ENCODE measurements at regions of chr6 and their contacts with region 1.

Region 1: DNA sequence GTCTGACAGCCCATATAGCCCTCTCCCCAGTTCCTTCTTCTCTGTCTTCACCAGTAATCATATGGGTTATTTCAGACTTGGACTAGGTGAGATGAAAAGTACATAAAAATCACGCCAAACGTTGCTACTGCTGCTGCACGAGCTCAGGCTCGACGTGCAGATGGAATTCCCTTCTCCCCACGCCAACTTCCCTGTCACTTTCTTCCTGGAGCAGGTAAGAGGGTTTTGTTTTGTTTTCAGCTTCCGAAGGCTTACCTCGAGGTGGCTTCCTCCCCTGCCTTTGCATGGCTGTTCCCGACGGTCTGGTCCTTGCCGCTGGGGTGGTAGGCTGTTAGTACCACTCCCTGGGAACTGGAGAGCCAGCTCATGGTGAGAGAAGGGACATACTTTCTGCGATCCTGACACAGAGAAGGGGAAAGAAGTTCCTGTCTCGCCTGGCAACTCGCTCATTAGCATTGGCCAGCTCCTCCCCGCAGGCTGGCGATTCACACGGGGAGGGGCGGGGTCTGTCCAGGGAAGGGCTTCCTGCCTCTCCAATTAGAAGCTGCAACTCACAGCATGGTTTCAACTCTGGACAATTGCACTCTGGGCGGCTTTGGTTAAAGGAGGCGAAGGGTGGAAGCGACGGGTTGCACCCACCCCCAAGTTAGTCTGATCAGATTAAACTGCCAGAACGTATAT is at the start of gene ARHGAP18:
- DNase-seq: peak; percentile 78
- ATAC-seq: peak; percentile 92
- H3K4me3 ChIP-seq: peak within 1 kb of the TSS; percentile 94
- H3K27ac ChIP-seq: peak within 1 kb of the TSS; percentile 73
- H3K4me1 ChIP-seq: peaks cover 17% of the 10 kb centered on the region
- H3K27me3 ChIP-seq: no peaks in the 10 kb centered on the region
- CTCF ChIP-seq: no peak
- EP300 ChIP-seq: no peak
- POLR2A ChIP-seq: peak; percentile 77
- RAD21 ChIP-seq: no peak
- polyA plus RNA-seq, gene ARHGAP18: 24.9 to 28.0 TPM

Region 2: GRCh38 chr6:129621247-129621646 is 88.7 kb before region 1 on chr6:
- CTCF ChIA-PET with region 1: interaction called, 6 read pairs
- POLR2A ChIA-PET with region 1: no interaction called
- RAD21 ChIA-PET with region 1: no interaction called
- SMC1A ChIA-PET with region 1: interaction called, 5 read pairs
- in situ Hi-C with region 1: no loop called
- intact Hi-C with region 1: loop called (anchors 5 kb)
- DNase-seq: no peak
- ATAC-seq: peak; percentile 74
- H3K4me3 ChIP-seq: no peak overlapping the region
- H3K27ac ChIP-seq: no peak overlapping the region
- H3K4me1 ChIP-seq: no peaks in the 10 kb centered on the region
- H3K27me3 ChIP-seq: no peaks in the 10 kb centered on the region
- CTCF ChIP-seq: peak; percentile 29 to 50 (median 37); a peak in 4 of 6 replicates
- EP300 ChIP-seq: no peak
- POLR2A ChIP-seq: no peak
- RAD21 ChIP-seq: 0 out of 2 replicates have a peak, but pooled peaks have one; percentile 7

Region 3: GRCh38 chr6:129646642-129647041 is 63.3 kb before region 1 on chr6:
- CTCF ChIA-PET with region 1: interaction called, 4 read pairs
- POLR2A ChIA-PET with region 1: interaction called, 17 read pairs
- RAD21 ChIA-PET with region 1: interaction called, 7 read pairs
- SMC1A ChIA-PET with region 1: interaction called, 8 read pairs
- in situ Hi-C with region 1: no loop called
- intact Hi-C with region 1: no loop called
- DNase-seq: peak; percentile 61
- ATAC-seq: peak; percentile 84
- H3K4me3 ChIP-seq: no peak overlapping the region
- H3K27ac ChIP-seq: peak overlapping the region; percentile 65
- H3K4me1 ChIP-seq: peaks cover 42% of the 10 kb centered on the region
- H3K27me3 ChIP-seq: no peaks in the 10 kb centered on the region
- CTCF ChIP-seq: no peak
- EP300 ChIP-seq: peak in 1 of 2 experiments; percentile 77; a peak in 2 of 4 replicates
- POLR2A ChIP-seq: no peak
- RAD21 ChIP-seq: no peak

Region 4: GRCh38 chr6:129661536-129662405 is 48.1 kb before region 1 on chr6:
- CTCF ChIA-PET with region 1: interaction called, 3 read pairs
- POLR2A ChIA-PET with region 1: interaction called, 11 read pairs
- RAD21 ChIA-PET with region 1: interaction called, 14 read pairs
- SMC1A ChIA-PET with region 1: interaction called, 26 read pairs
- in situ Hi-C with region 1: no loop called
- intact Hi-C with region 1: no loop called
- DNase-seq: no peak
- ATAC-seq: peak; percentile 40
- H3K4me3 ChIP-seq: peak overlapping the region; percentile 7; the same call in 1 of the 2 replicates
- H3K27ac ChIP-seq: peak overlapping the region; percentile 89
- H3K4me1 ChIP-seq: peaks cover 44% of the 10 kb centered on the region
- H3K27me3 ChIP-seq: no peaks in the 10 kb centered on the region
- CTCF ChIP-seq: no peak
- EP300 ChIP-seq: peak in 1 of 2 experiments; percentile 61; a peak in 1 of 4 replicates
- POLR2A ChIP-seq: no peak
- RAD21 ChIP-seq: no peak

Region 5: DNA sequence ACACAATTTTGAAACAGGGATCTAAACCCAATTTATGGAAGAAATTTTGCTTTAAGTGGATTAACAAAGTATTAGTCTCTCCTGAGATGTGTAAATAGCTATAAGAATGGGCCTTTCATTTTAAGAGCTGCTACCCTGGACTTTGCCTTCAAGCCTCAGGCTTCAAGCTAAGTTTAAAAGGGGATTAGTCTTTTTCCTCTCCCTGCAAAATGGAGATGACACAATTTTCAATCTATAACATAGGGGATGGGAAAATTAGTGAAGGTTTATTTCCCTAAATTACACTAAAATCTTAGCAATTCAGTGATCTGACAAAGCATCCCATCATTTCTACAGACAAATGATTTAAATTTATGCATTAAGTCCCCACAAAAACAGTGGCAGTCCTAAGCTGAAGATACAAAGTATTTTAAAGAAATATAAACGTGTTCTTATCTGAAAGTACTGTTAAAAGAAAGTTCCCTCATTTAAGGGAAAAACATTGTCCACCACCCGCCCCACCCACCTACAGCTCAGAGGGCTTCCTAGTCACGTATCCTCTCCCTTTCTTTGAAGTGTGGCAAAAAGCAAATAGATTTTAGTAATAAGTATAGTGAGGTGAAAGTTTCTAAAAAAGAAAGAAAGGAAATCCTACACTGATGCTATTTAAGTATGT is 14.4 kb before region 1 on chr6:
- CTCF ChIA-PET with region 1: interaction called, 58 read pairs
- POLR2A ChIA-PET with region 1: interaction called, 60 read pairs
- RAD21 ChIA-PET with region 1: interaction called, 93 read pairs
- SMC1A ChIA-PET with region 1: interaction called, 87 read pairs
- in situ Hi-C with region 1: no loop called
- intact Hi-C with region 1: no loop called
- DNase-seq: no peak
- ATAC-seq: peak; percentile 64
- H3K4me3 ChIP-seq: peak overlapping the region; percentile 48
- H3K27ac ChIP-seq: peak overlapping the region; percentile 60
- H3K4me1 ChIP-seq: peaks cover 64% of the 10 kb centered on the region
- H3K27me3 ChIP-seq: no peaks in the 10 kb centered on the region
- CTCF ChIP-seq: no peak
- EP300 ChIP-seq: no peak; a peak in 1 of 4 replicates
- POLR2A ChIP-seq: no peak
- RAD21 ChIP-seq: no peak

Region 6: DNA sequence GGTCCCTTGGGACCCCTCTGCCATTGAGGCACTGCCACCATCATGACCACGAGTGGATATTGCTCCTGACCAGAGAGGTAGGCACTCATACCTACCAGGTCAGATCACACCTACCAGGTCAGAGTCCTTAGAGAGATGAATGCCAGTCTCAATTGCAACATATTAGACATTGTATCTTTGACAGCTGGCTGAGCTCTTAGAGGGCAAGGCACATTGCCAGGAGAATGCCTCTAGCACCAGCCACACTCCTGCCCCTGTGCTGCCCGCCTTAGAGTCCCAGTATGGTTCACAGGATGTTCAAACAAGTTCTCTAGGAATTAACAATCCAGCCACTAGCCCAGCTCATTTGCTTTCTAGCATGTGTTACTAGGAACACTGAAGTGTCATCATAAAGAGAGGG is 85.4 kb after region 1 on chr6:
- CTCF ChIA-PET with region 1: no interaction called
- POLR2A ChIA-PET with region 1: no interaction called
- RAD21 ChIA-PET with region 1: no interaction called
- SMC1A ChIA-PET with region 1: no interaction called
- in situ Hi-C with region 1: no loop called
- intact Hi-C with region 1: no loop called
- DNase-seq: no peak
- ATAC-seq: no peak
- H3K4me3 ChIP-seq: no peak overlapping the region
- H3K27ac ChIP-seq: no peak overlapping the region
- H3K4me1 ChIP-seq: no peaks in the 10 kb centered on the region
- H3K27me3 ChIP-seq: no peaks in the 10 kb centered on the region; a peak in 1 of 4 replicates
- CTCF ChIP-seq: no peak
- EP300 ChIP-seq: no peak
- POLR2A ChIP-seq: no peak
- RAD21 ChIP-seq: no peak